Activated CD4-positive, alpha-beta T cell treated with anti-CD3 and anti-CD28 coated beads for 36 hours (primary cell): ENCODE measurements at regions of chr3 and their contacts with region 1.

Region 1: GRCh38 chr3:121545574-121546455 is at the start of gene POLQ:
- DNase-seq: peak; percentile 92
- ATAC-seq: peak; percentile 98
- H3K4me3 Mint-ChIP-seq: peak within 1 kb of the TSS; percentile 91
- H3K27ac Mint-ChIP-seq: peak within 1 kb of the TSS; percentile 94
- H3K4me1 Mint-ChIP-seq: peaks cover 4% of the 10 kb centered on the region
- H3K27me3 Mint-ChIP-seq: no peaks in the 10 kb centered on the region
- total RNA-seq, gene POLQ: 22.8 to 23.4 TPM

Region 2: DNA sequence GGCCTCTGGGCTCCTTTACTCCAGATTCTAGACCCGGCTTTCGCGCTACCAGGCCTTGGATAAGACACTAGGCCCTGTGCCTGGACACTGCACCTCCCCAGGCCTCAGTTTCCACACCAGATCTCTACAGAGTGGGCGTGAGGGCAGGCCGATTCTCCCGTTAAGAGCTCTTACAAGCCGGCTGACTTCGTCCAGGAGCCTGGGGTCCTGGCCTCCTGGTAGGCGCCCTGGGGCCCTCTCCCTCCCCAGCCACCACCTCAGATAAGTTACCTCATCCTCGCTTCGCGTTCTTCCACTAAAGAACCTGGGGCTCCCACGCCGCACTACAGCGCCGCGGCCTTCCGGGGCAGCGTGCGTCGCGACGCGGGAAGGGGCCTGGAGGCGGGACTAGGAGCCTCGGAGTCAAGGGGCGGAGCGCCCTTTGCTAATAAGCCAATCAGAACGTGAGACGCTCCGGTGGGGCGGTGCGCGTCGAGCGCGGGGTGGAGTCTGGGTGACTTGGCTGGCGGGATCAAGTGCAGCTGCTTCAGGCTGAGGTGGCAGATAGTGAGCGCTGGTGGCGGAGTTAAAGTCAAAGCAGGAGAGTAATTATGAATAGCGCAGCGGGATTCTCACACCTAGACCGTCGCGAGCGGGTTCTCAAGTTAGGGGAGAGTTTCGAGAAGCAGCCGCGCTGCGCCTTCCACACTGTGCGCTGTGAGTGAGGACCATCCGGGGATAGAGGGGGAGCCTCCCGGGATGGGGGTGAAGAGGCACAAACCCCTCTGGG is 289.1 kb after region 1 on chr3 and contains the starts of genes EAF2 and IQCB1:
- CTCF ChIA-PET with region 1: interaction called, 3 read pairs
- POLR2A ChIA-PET with region 1: no interaction called
- intact Hi-C with region 1: loop called (anchors 1 to 10 kb)
- DNase-seq: peak; percentile 98
- ATAC-seq: peak; percentile 98
- H3K4me3 Mint-ChIP-seq: peak within 1 kb of the TSS; percentile 98
- H3K27ac Mint-ChIP-seq: peak within 1 kb of the TSS; percentile 94
- H3K4me1 Mint-ChIP-seq: peaks cover 38% of the 10 kb centered on the region
- H3K27me3 Mint-ChIP-seq: no peaks in the 10 kb centered on the region
- total RNA-seq, gene EAF2: 12.4 to 12.9 TPM
- total RNA-seq, gene IQCB1: 41.3 to 42.8 TPM

Region 3: DNA sequence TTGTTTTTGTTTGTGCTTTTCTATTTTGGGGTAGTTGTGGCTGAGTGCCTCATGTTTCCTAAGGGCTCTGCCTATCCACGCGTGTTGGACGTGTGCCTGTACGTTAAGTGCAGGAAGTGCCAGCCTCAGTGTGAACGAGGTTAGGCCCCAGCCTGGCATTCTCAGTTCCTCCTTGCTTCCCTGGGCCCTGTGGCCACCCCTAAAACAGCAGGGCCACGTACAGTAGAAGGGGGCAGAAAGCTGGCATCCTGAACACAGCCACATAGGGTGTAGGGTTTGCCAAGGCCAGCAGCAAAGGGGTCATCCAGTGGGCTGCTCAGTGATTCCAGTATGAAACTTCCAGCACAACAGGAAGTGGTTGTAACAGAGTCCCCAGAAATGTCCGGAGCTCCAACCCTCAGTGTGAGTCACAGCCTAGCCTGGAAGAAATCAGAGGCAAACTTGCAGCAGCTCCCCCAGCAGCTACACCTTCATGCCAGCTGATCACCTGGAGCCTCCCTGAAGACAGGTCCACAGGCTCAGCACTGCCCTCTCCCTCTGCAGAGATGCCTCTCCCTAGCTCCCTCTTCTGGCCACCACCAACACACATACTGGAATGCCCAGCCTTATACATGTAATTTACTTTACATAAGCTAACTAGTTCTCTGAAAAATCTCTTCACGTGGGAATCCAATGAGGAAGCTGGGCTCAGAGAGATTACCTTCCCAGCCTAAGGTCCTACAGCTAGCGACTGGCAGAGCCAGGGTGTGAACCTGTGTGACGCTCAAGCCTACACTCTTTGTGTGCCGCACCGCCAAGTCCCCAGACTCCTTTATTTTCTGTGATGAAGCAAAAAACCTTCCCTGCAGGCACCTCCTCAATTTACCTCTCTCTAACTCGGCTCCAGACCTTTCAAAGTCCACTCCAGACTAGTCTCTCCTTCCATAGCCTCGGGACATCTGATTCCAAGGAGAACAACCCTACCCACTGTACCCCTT is 449.6 kb after region 1 on chr3:
- CTCF ChIA-PET with region 1: interaction called, 3 read pairs
- POLR2A ChIA-PET with region 1: no interaction called
- intact Hi-C with region 1: loop called (anchors 5 kb)
- DNase-seq: peak; percentile 59
- ATAC-seq: peak; percentile 75
- H3K4me3 Mint-ChIP-seq: no peak overlapping the region
- H3K27ac Mint-ChIP-seq: no peak overlapping the region
- H3K4me1 Mint-ChIP-seq: peaks cover 26% of the 10 kb centered on the region
- H3K27me3 Mint-ChIP-seq: no peaks in the 10 kb centered on the region

Region 4: DNA sequence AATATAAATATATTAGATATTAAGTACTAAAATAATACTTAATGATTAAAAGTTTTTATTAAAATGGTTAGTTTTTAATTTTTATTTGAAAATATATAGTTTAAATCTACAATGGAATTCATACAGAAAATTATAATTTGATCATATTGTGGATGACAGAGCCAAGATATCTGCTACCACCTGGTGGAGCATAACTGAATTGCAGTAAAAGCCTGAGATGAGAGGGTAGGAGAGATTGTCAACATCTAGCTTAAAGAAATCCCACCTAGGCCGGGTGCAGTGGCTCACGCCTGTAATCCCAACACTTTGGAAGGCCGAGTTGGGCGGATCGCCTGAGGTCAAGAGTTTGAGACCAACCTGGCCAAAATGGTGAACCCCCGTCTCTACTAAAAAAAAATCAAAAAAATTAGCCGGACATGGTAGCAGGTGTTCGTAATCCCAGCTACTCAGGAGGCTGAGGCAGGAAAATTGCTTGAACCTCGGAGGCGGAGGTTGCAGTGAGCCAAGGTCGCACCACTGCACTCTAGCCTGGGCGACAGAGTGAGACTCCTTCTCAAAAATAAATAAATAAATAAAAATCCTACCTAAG is 754.2 kb after region 1 on chr3:
- CTCF ChIA-PET with region 1: interaction called, 6 read pairs
- POLR2A ChIA-PET with region 1: no interaction called
- intact Hi-C with region 1: loop called (anchors 1 kb)
- DNase-seq: peak; percentile 53
- ATAC-seq: peak; percentile 59
- H3K4me3 Mint-ChIP-seq: no peak overlapping the region
- H3K27ac Mint-ChIP-seq: no peak overlapping the region
- H3K4me1 Mint-ChIP-seq: peaks cover 18% of the 10 kb centered on the region
- H3K27me3 Mint-ChIP-seq: no peaks in the 10 kb centered on the region

Region 5: GRCh38 chr3:122564155-122564912 is 1018.5 kb after region 1 on chr3 and contains the starts of genes DTX3L and PARP9:
- CTCF ChIA-PET with region 1: no interaction called
- POLR2A ChIA-PET with region 1: no interaction called
- intact Hi-C with region 1: loop called in 1 of 2 experiments (anchors 5 kb)
- DNase-seq: peak; percentile 89
- ATAC-seq: peak; percentile 83
- H3K4me3 Mint-ChIP-seq: peak within 1 kb of the TSS; percentile 83
- H3K27ac Mint-ChIP-seq: peak within 1 kb of the TSS; percentile 97
- H3K4me1 Mint-ChIP-seq: peaks cover 67% of the 10 kb centered on the region
- H3K27me3 Mint-ChIP-seq: no peaks in the 10 kb centered on the region
- total RNA-seq, gene DTX3L: 42.0 to 52.0 TPM
- total RNA-seq, gene PARP9: 39.9 to 46.0 TPM